ENCODE measurements at regions of chr7 and their contacts with region 1.

Region 1: DNA sequence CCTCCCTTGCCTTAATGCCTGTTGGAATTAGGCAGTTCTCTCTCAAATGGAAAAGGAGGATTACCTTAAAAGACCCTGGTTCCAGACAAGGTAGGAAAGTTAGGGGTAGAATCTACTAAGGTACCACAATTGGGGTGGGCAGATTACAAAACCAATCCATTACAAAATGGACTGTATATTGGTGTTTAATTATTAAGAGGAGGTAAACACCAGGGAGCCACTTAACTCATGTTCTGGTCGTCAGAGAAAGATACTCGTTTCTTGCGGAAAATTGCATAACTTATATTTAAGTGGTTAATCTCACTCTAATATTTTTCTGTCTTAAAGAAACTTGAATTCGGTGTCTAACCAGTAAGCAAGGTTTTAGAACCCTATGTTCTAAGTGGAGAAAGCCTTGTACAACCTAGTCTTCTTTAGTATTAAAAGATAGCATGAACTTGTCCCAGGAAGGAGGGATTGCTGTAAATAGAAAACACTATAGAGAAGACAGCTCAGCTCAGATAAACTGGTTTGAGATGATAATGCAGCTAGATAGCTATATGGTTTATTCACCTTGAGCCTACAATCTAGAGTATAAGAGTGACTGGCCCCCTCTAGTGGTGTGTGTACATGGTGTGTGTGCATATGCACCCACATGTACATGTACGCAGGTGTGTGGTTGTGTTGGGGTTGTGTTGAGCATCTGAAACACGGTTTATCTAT is 58.0 kb upstream of the STRIP2 start:
- DNase-seq: peak; percentile 64
- H3K4me3 Mint-ChIP-seq: no peak overlapping the region
- H3K27ac Mint-ChIP-seq: no peak overlapping the region
- H3K4me1 Mint-ChIP-seq: no peaks in the 10 kb centered on the region
- H3K27me3 Mint-ChIP-seq: no peaks in the 10 kb centered on the region
- CTCF ChIP-seq: peak; percentile 49

Region 2: GRCh38 chr7:129332284-129333035 is 43.8 kb before region 1 on chr7:
- CTCF ChIA-PET with region 1: interaction called, 10 read pairs
- POLR2A ChIA-PET with region 1: no interaction called
- intact Hi-C with region 1: no loop called
- DNase-seq: peak; percentile 21
- H3K4me3 Mint-ChIP-seq: no peak overlapping the region
- H3K27ac Mint-ChIP-seq: no peak overlapping the region
- H3K4me1 Mint-ChIP-seq: peaks cover 7% of the 10 kb centered on the region
- H3K27me3 Mint-ChIP-seq: no peaks in the 10 kb centered on the region
- CTCF ChIP-seq: no peak

Region 3: DNA sequence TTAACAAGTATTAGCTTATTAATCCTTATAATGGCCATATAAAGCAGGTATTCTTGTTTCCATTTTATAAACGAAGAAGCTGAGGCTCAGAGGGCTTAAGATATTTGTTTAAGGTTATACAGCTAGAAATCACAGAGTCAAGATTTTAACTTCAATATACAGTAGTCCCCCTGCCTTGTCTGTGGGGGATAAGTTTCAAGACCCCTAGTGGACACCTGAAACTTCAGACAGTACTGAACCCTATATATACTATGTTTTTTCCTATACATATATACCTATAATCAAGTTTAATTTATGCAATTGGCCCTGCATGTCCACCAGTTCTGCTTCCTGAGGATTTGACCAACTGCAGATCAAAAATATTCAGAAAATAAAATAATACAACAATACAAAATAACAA is 13.6 kb after region 1 on chr7:
- CTCF ChIA-PET with region 1: interaction called, 30 read pairs
- POLR2A ChIA-PET with region 1: interaction called, 3 read pairs
- intact Hi-C with region 1: no loop called
- DNase-seq: no peak
- H3K4me3 Mint-ChIP-seq: no peak overlapping the region
- H3K27ac Mint-ChIP-seq: no peak overlapping the region
- H3K4me1 Mint-ChIP-seq: no peaks in the 10 kb centered on the region
- H3K27me3 Mint-ChIP-seq: no peaks in the 10 kb centered on the region
- CTCF ChIP-seq: no peak